K562 (cell line): ENCODE measurements at regions of chr10 and their contacts with region 1.

Region 1: DNA sequence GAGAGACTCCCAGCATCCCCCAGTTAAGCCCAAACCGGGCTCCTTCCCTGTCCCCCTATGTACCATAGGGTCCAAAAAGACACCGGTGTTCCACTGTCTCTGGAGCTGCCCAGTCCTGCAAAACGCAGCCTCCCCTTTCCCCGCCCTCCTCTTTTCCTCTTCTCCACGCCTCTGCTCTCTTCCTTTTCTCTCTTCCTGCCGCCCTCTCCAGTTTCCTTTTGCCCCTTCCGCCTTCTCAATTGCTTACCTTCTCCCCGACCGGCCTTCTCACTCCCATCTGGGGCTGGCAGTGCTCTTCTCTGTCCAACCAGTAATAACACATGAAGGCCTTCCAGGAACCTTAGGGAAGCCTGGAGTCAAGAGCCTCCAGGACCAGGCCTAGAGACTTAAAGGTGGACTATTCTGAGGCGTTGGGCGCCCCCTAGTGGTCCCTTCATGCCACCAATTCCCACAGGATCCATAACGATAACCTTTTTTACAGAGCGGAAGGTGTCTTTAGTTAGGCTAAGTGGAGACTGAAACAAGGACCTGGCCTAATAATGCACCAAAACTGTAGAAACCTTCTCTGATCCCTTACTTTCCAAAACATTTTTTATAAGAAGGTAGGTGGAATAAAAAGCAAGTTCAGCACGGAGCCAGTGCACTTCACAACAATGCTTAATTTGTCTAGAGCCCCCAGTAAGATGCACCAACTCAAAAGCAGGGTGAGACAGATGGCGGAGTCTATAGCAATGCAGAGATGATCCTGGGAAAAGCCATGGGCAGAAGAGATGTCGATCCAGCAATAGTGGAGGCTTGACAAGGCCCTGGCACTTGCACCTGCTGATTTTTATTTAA is 27.2 kb upstream of the MSRB2 start:
- DNase-seq: peak; percentile 73 to 92 (median 76)
- ATAC-seq: peak; percentile 94
- H3K4me3 ChIP-seq: no peak overlapping the region
- H3K27ac ChIP-seq: no peak overlapping the region
- H3K4me1 ChIP-seq: peaks cover 11 to 20% of the 10 kb centered on the region in 2 experiments; a peak in 4 of 5 replicates
- H3K27me3 ChIP-seq: no peaks in the 10 kb centered on the region
- CTCF ChIP-seq: peak; percentile 77 to 93 (median 88)
- EP300 ChIP-seq: no peak
- POLR2A ChIP-seq: no peak
- RAD21 ChIP-seq: peak; percentile 79 to 88

Region 2: GRCh38 chr10:21989453-21990154 is 1078.6 kb before region 1 on chr10:
- CTCF ChIA-PET with region 1: interaction called, 3 read pairs
- POLR2A ChIA-PET with region 1: no interaction called
- in situ Hi-C with region 1: no loop called
- intact Hi-C with region 1: loop called (anchors 5 kb)
- DNase-seq: peak; percentile 26 to 79 (median 48)
- ATAC-seq: peak; percentile 99
- H3K4me3 ChIP-seq: no peak overlapping the region
- H3K27ac ChIP-seq: no peak overlapping the region
- H3K4me1 ChIP-seq: peaks cover 0 to 3% of the 10 kb centered on the region in 2 experiments; a peak in 1 of 5 replicates
- H3K27me3 ChIP-seq: no peaks in the 10 kb centered on the region
- CTCF ChIP-seq: peak; percentile 75 to 85 (median 81)
- EP300 ChIP-seq: no peak
- POLR2A ChIP-seq: no peak
- RAD21 ChIP-seq: peak; percentile 66 to 78

Region 3: DNA sequence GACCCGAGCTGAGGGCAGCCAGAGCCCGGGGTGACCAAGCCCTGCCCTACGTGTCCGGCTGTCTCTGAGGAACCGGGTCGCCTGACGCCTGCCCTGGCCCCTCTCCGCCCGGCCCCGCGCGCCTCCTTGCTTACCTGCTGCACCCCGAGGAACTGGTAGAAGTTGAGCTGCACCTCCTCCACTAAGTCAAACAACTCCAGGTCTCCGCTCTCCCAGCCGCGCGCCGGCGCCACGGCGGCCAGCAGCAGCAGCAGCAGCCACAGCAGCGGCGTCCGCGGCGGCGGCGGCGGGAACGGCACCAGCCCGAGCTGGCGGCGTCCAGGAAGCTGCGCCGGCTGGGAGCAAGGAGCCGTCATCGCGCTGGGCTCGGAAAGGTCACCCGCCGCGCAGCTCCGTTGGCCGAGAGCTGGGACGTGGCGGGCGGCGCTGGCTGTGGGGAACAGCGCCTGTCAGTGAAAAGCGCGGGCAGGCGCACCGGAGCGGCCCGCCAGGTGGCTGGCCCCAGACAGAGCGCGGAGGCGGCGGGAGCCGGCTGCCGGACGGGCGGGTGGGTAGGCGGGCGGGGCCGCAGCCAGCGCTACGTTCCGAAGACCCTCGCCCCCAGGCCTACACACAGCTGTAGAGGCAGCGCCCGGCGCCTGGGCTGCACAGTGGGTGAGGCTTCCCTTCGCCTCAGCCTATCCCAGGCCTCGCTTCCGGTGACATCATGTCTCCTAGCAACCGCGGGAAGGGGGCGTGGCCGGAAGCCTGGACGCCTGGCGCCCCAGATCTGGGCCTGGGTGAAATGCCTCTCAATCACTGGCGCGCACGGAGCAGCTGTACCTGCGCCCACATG is 1064.9 kb before region 1 on chr10 and contains the start of gene DNAJC1:
- CTCF ChIA-PET with region 1: no interaction called
- POLR2A ChIA-PET with region 1: no interaction called
- in situ Hi-C with region 1: loop called (anchors 10 kb)
- intact Hi-C with region 1: no loop called
- DNase-seq: peak; percentile 96 to 98 (median 97)
- ATAC-seq: peak; percentile 96
- H3K4me3 ChIP-seq: peak within 1 kb of the TSS; percentile 85
- H3K27ac ChIP-seq: peak within 1 kb of the TSS; percentile 87
- H3K4me1 ChIP-seq: peaks cover 8 to 21% of the 10 kb centered on the region in 2 experiments
- H3K27me3 ChIP-seq: no peaks in the 10 kb centered on the region
- CTCF ChIP-seq: no peak; a peak in 1 of 6 replicates
- EP300 ChIP-seq: no peak
- POLR2A ChIP-seq: peak; percentile 74
- RAD21 ChIP-seq: peak in 1 of 2 experiments; percentile 12; a peak in 2 of 4 replicates
- polyA plus RNA-seq, gene DNAJC1: 5.4 to 6.5 TPM

Region 4: GRCh38 chr10:22573820-22574569 is 494.2 kb before region 1 on chr10:
- CTCF ChIA-PET with region 1: interaction called, 4 read pairs
- POLR2A ChIA-PET with region 1: no interaction called
- in situ Hi-C with region 1: loop called (anchors 10 kb)
- intact Hi-C with region 1: loop called (anchors 2 kb)
- DNase-seq: peak; percentile 23 to 43 (median 28)
- ATAC-seq: peak; percentile 69
- H3K4me3 ChIP-seq: no peak overlapping the region
- H3K27ac ChIP-seq: no peak overlapping the region
- H3K4me1 ChIP-seq: no peaks in the 10 kb centered on the region
- H3K27me3 ChIP-seq: no peaks in the 10 kb centered on the region
- CTCF ChIP-seq: peak; percentile 46 to 62 (median 56)
- EP300 ChIP-seq: no peak
- POLR2A ChIP-seq: no peak
- RAD21 ChIP-seq: peak; percentile 47 to 81

Region 5: GRCh38 chr10:22657566-22658225 is 410.5 kb before region 1 on chr10:
- CTCF ChIA-PET with region 1: no interaction called
- POLR2A ChIA-PET with region 1: no interaction called
- in situ Hi-C with region 1: no loop called
- intact Hi-C with region 1: no loop called
- DNase-seq: no peak
- ATAC-seq: no peak
- H3K4me3 ChIP-seq: no peak overlapping the region
- H3K27ac ChIP-seq: no peak overlapping the region
- H3K4me1 ChIP-seq: peaks cover 6 to 23% of the 10 kb centered on the region in 2 experiments
- H3K27me3 ChIP-seq: no peaks in the 10 kb centered on the region
- CTCF ChIP-seq: no peak
- EP300 ChIP-seq: no peak
- POLR2A ChIP-seq: no peak
- RAD21 ChIP-seq: no peak

Region 6: DNA sequence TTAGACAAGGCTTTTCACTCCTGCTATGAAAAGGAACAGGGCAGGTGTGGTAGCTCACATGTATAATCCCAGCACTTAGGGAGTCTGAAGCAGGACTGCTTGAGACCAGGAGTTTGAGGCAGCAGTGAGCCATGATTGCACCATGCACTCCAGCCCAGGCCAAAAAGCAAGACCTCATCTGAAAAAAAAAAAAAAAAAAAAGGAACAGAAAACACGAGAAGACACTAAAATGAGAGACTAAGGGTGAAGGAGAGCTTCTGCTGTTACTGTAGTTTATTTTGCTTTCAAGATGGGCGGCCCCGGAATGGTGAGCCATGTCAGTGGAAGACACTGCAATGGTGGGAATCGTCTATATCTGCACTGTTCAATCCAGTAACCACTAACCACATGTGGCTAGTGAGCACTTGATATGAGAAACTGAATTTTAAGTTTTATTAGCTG is 363.7 kb before region 1 on chr10:
- CTCF ChIA-PET with region 1: no interaction called
- POLR2A ChIA-PET with region 1: no interaction called
- in situ Hi-C with region 1: no loop called
- intact Hi-C with region 1: no loop called
- DNase-seq: no peak
- ATAC-seq: 0 out of 3 replicates have a peak, but pooled peaks have one; percentile 9
- H3K4me3 ChIP-seq: no peak overlapping the region
- H3K27ac ChIP-seq: peak overlapping the region; percentile 41; the same call in 2 of the 3 replicates
- H3K4me1 ChIP-seq: peaks cover 19 to 61% of the 10 kb centered on the region in 2 experiments
- H3K27me3 ChIP-seq: no peaks in the 10 kb centered on the region
- CTCF ChIP-seq: no peak
- EP300 ChIP-seq: no peak
- POLR2A ChIP-seq: no peak
- RAD21 ChIP-seq: no peak

Region 7: DNA sequence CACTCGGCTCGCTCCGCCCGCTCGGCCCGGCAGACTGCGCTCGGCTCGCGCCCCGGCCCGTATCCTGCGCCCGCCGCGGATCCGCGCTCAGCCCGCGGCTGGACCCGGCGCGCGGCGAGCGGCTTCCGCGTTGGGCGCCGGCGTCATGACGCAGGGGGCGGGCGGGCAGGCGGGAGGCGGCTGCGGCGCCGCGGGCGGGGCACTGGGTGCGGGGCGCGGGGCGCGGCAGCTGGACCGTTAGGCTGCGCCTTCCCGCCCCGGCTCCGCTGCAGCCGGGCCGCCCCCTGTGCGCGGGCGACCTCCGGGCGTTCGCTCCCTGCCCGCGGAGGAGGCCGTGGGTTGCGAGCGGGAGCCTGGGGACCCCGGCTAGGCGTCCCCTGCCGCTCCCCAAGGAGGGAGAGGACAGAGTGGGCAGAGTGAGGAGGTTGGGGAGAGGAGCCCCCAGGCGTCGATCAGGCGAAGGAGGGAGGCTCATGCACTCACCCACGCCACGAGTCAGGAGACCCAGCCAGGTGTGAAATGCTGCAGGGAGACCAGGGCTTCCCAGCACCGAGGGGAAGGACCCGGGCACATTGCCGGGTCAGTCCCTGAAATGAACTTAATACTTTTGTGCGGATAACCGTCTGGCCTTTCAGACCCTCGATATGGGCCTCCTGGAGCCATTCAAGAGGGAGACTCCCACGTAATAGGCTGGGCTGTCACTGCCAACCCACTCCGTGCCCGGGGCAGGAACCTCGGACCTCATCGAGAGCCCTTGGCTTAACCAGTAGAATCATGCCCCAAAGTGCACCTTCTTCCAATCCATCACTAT is 353.5 kb before region 1 on chr10 and contains the start of gene PIP4K2A:
- CTCF ChIA-PET with region 1: no interaction called
- POLR2A ChIA-PET with region 1: interaction called, 4 read pairs
- in situ Hi-C with region 1: no loop called
- intact Hi-C with region 1: loop called (anchors 1 kb)
- DNase-seq: peak; percentile 86 to 91 (median 88)
- ATAC-seq: peak; percentile 72
- H3K4me3 ChIP-seq: peak within 1 kb of the TSS; percentile 85
- H3K27ac ChIP-seq: peak within 1 kb of the TSS; percentile 93
- H3K4me1 ChIP-seq: peaks cover 19 to 23% of the 10 kb centered on the region in 2 experiments; a peak in 4 of 5 replicates
- H3K27me3 ChIP-seq: no peaks in the 10 kb centered on the region
- CTCF ChIP-seq: no peak
- EP300 ChIP-seq: no peak
- POLR2A ChIP-seq: no peak; the same call in 1 of the 2 replicates
- RAD21 ChIP-seq: 0 out of 4 replicates have a peak, but pooled peaks of 1 of the 2 experiments have one; percentile 13
- polyA plus RNA-seq, gene PIP4K2A: 64.8 to 87.2 TPM

Region 8: GRCh38 chr10:22854935-22855421 is 213.2 kb before region 1 on chr10:
- CTCF ChIA-PET with region 1: no interaction called
- POLR2A ChIA-PET with region 1: no interaction called
- in situ Hi-C with region 1: no loop called
- intact Hi-C with region 1: loop called (anchors 5 kb)
- DNase-seq: peak in 2 of 4 experiments; percentile 61 to 65
- ATAC-seq: peak; percentile 93
- H3K4me3 ChIP-seq: no peak overlapping the region
- H3K27ac ChIP-seq: no peak overlapping the region
- H3K4me1 ChIP-seq: peaks cover 0 to 25% of the 10 kb centered on the region in 2 experiments; a peak in 3 of 5 replicates
- H3K27me3 ChIP-seq: no peaks in the 10 kb centered on the region
- CTCF ChIP-seq: peak; percentile 34 to 73 (median 43); a peak in 4 of 6 replicates
- EP300 ChIP-seq: peak; percentile 29
- POLR2A ChIP-seq: no peak
- RAD21 ChIP-seq: peak; percentile 85 to 88

Region 9: DNA sequence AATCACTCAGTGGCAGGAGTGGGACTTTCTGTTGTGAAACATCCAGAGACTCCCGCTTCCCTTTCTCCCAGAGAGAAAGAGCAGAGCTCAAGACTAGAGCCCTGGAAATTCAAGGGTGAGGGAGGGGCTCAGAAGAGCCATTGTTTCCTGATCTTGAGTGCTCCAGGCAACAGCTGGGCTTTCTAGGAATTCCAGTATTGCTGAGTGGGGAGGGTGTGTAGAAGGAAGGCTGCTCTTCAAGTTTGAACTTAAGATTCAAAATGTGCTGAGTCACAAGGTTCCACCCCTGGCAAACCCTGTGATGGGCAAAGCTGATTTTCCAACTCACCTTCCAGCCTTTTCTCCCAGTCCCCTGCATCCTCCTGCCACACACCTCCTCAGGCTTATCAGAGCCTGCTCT is 15.1 kb before region 1 on chr10:
- CTCF ChIA-PET with region 1: no interaction called
- POLR2A ChIA-PET with region 1: interaction called, 10 read pairs
- in situ Hi-C with region 1: no loop called
- intact Hi-C with region 1: no loop called
- DNase-seq: peak in 1 of 4 experiments; percentile 68
- ATAC-seq: no peak; the same call in 2 of the 3 replicates
- H3K4me3 ChIP-seq: no peak overlapping the region
- H3K27ac ChIP-seq: peak overlapping the region; percentile 82
- H3K4me1 ChIP-seq: peaks cover 12 to 61% of the 10 kb centered on the region in 2 experiments
- H3K27me3 ChIP-seq: no peaks in the 10 kb centered on the region
- CTCF ChIP-seq: no peak
- EP300 ChIP-seq: peak; percentile 26; the same call in 1 of the 2 replicates
- POLR2A ChIP-seq: no peak
- RAD21 ChIP-seq: no peak